Head of caudate nucleus (tissue), 42 donors: ENCODE measurements at regions of chr1 and their contacts with region 1.

Region 1: GRCh38 chr1:202709276-202710041 is 795 bp downstream of the SYT2 start:
- DNase-seq: no peak

Region 2: GRCh38 chr1:202531472-202531811 is 178.0 kb before region 1 on chr1:
- intact Hi-C with region 1: no loop called
- DNase-seq: no peak

Region 3: DNA sequence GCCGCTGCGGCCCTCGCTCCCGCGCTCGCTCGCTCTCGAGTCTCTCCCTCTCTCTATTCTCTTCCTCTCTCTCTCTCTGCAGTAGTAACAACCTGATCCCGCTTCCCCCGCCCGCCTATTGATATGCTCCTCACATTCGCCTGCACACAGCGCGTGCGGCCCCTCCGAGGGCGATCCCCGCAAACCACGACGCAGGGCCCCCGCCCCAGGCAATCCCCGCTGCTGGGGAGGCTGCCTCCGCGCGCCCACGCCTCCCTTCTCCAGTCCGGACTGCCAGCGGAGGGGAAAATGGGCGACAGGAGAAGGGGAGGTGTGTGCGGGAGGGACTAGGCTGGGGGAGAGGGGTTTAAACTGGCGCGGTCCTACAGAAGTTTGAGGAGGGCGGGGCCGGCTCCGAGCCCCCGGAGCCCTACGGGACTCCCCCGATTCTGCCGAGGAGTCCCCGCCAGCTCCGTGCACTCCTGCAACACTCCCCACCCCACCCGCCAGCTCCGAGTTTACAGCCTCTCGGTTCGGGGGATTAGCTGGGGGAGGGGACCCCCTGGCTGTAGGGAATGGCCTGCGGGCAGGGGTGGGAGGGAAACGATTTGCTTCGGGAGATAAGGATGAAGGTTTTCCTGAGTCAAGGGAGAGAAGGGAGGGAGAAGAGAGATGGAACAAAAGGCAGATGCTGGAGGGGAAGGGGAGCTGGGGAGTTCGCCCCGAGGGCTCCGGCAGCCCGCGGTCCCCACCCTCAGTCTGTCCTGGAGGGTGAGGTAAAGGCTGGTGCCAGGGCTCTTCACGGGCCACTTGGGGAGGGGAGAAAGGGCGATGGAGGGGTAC is 65.9 kb before region 1 on chr1:
- intact Hi-C with region 1: loop called (anchors 10 kb)
- DNase-seq: peak in 26 of 42 donors; percentile 24 to 74 (median 54)

Region 4: DNA sequence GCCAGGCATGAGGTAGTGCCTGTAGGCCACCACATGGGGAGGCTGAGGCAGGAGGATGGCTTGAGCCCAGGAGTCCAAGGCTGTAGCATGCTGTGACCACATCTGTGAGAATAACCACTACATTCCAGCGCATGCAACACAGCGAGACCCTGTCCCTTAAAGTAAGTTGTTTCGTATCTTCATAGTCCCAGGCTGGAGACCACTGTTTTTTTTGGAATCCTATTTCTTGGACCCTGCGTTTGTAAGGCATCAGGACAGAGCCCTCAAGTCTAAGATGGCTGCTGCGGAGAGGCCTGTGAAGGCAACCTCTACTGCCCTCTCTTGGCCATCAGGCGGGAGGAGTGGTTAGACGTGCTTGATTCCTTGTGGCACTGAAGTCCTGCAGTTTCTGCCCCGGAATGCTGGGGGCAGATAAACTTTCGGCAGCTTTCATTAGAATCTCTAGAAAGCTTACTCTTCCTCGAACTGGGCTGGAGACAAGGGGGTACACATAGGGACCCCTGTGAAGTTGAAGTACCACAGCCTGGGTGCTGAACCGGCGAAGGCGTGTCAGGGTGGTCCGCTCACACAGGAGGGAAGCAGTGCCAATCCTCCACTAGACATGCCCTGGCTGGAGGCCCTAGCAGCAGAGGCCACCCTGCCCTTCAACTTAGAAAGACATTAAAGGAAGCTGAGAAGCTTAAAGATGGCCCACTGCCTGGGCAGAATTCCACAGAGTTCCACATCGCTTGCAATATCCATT is 142.9 kb after region 1 on chr1:
- intact Hi-C with region 1: no loop called
- DNase-seq: peak in 2 of 42 donors; percentile 12 to 13